IMR-90 (cell line): ENCODE measurements at regions of chr19 and their contacts with region 1.

Region 1: GRCh38 chr19:45643024-45643926 is 4.1 kb upstream of the EML2 start:
- DNase-seq: peak; percentile 61
- ATAC-seq: peak; percentile 19
- H3K4me3 ChIP-seq: no peak overlapping the region
- H3K27ac ChIP-seq: no peak overlapping the region
- H3K4me1 ChIP-seq: peaks cover 13% of the 10 kb centered on the region
- H3K27me3 ChIP-seq: no peaks in the 10 kb centered on the region
- CTCF ChIP-seq: peak; percentile 94
- POLR2A ChIP-seq: no peak
- RAD21 ChIP-seq: peak; percentile 88

Region 2: GRCh38 chr19:45423589-45424190 is 219.6 kb before region 1 on chr19 and contains the start of gene ERCC1:
- CTCF ChIA-PET with region 1: no interaction called
- POLR2A ChIA-PET with region 1: no interaction called
- dilution Hi-C with region 1: no loop called
- in situ Hi-C with region 1: no loop called
- intact Hi-C with region 1: loop called (anchors 5 kb)
- DNase-seq: peak; percentile 94
- ATAC-seq: peak; percentile 83
- H3K4me3 ChIP-seq: peak within 1 kb of the TSS; percentile 70
- H3K27ac ChIP-seq: peak within 1 kb of the TSS; percentile 98
- H3K4me1 ChIP-seq: peaks cover 5% of the 10 kb centered on the region
- H3K27me3 ChIP-seq: no peaks in the 10 kb centered on the region
- CTCF ChIP-seq: no peak
- POLR2A ChIP-seq: peak; percentile 88
- RAD21 ChIP-seq: no peak
- total RNA-seq, gene ERCC1: 76.9 and 84.2 TPM in 2 replicates

Region 3: DNA sequence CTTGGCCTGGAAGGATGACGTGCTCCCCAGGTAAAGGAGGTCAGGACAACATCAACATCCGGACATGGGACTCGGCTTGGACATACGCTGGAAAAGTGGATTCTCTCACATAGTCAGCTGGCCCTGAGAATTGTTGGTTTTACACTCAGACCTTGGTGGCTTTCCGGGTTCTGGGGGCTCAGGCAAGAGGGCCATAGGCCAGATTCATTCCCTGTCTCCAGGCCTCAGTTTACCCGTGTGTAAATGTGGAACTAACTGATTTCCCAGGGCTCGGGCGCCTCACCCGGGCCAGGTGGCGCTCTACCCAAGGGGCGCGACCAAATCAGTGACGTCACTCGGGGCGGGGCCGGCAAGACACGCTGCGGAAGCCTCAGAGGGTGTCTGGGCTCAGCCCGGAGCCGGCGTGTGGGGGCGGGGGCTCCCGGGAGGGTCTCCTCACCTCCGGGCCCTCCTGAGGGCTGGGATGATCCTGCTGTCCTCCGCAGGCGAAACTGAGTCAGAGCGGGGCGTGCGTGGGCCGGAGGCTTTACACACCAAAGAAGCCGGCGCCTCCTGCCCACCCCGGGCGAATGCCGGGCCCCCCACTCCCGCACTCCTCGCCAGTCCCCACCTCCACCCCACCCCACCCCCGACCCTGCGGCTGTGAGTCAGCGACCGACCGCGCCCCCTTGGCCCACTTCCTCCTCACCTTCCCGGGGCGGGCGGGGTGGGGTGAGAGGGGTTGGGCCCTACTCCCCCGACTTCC is 136.9 kb before region 1 on chr19:
- CTCF ChIA-PET with region 1: no interaction called
- POLR2A ChIA-PET with region 1: no interaction called
- dilution Hi-C with region 1: no loop called
- in situ Hi-C with region 1: no loop called
- intact Hi-C with region 1: loop called (anchors 5 kb)
- DNase-seq: peak; percentile 88
- ATAC-seq: peak; percentile 60
- H3K4me3 ChIP-seq: peak overlapping the region; percentile 92
- H3K27ac ChIP-seq: peak overlapping the region; percentile 94
- H3K4me1 ChIP-seq: peaks cover 11% of the 10 kb centered on the region
- H3K27me3 ChIP-seq: no peaks in the 10 kb centered on the region
- CTCF ChIP-seq: peak; percentile 59
- POLR2A ChIP-seq: peak; percentile 65
- RAD21 ChIP-seq: no peak

Region 4: DNA sequence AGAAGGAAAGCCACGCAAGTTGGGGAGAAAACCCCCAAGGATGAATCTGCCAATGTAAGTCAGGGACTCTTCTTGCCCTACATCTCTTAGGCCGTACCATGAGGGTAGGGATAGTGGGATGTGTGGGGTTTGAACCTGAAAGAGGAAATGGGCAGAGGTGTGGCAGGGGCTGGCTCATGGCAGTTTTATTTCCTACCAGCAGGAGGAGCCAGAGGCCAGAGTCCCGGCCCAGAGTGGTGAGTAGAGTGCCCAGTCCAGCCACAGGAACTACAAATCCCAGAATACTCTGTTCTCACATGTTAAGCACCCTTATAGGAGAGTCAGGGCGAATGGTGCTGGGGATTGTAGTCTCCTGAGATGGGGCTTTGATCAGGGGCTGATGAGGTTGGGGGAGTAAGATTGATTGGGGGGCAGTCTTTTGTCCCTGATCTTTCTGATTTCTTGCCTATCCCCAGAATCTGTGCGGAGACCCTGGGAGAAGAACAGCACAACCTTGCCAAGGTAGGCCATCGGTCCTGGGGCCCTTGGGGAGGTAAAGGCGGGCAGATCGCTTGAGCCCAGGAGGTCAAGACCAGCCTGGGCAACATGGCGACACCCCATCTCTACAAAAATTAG is 119.5 kb before region 1 on chr19:
- CTCF ChIA-PET with region 1: no interaction called
- POLR2A ChIA-PET with region 1: no interaction called
- dilution Hi-C with region 1: no loop called
- in situ Hi-C with region 1: loop called (anchors 10 kb)
- intact Hi-C with region 1: loop called (anchors 1 kb)
- DNase-seq: peak; percentile 80
- ATAC-seq: peak; percentile 92
- H3K4me3 ChIP-seq: no peak overlapping the region
- H3K27ac ChIP-seq: no peak overlapping the region
- H3K4me1 ChIP-seq: peaks cover 2% of the 10 kb centered on the region; the same call in 1 of the 2 replicates
- H3K27me3 ChIP-seq: no peaks in the 10 kb centered on the region
- CTCF ChIP-seq: peak; percentile 93
- POLR2A ChIP-seq: no peak
- RAD21 ChIP-seq: peak; percentile 93

Region 5: DNA sequence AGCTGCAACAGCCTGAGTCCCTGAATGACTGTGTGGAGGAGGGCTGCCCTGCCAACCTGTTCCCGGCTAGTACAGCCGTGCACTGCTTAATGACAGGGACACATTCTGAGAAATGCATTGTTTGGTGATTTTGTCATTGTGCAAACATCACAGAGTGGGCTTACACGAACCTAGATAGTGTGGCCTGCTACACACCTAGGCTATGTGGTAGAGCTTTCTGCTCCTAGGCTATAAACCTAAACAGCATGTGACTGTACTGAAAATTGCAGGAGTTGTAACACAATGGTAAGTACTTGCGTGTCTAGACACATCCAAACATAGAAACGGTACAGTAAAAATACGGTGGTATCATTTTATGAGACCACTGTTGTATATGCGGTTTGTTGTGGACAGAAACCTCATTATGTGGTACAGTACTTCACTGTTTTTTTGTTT is 101.0 kb before region 1 on chr19:
- CTCF ChIA-PET with region 1: no interaction called
- POLR2A ChIA-PET with region 1: no interaction called
- dilution Hi-C with region 1: no loop called
- in situ Hi-C with region 1: no loop called
- intact Hi-C with region 1: no loop called
- DNase-seq: no peak
- ATAC-seq: no peak
- H3K4me3 ChIP-seq: no peak overlapping the region
- H3K27ac ChIP-seq: no peak overlapping the region
- H3K4me1 ChIP-seq: no peaks in the 10 kb centered on the region
- H3K27me3 ChIP-seq: no peaks in the 10 kb centered on the region
- CTCF ChIP-seq: no peak
- POLR2A ChIP-seq: no peak
- RAD21 ChIP-seq: no peak

Region 6: GRCh38 chr19:45584332-45585157 is 58.7 kb before region 1 on chr19 and contains the start of gene OPA3:
- CTCF ChIA-PET with region 1: no interaction called
- POLR2A ChIA-PET with region 1: no interaction called
- dilution Hi-C with region 1: no loop called
- in situ Hi-C with region 1: no loop called
- intact Hi-C with region 1: loop called (anchors 2 kb)
- DNase-seq: peak; percentile 100
- ATAC-seq: peak; percentile 96
- H3K4me3 ChIP-seq: peak within 1 kb of the TSS; percentile 81
- H3K27ac ChIP-seq: peak within 1 kb of the TSS; percentile 92
- H3K4me1 ChIP-seq: 0 out of 2 replicates have a peak, but pooled peaks cover 1% of the 10 kb centered on the region
- H3K27me3 ChIP-seq: no peaks in the 10 kb centered on the region
- CTCF ChIP-seq: no peak
- POLR2A ChIP-seq: peak; percentile 97
- RAD21 ChIP-seq: no peak; the same call in 1 of the 2 replicates
- total RNA-seq, gene OPA3: 3.9 and 5.2 TPM in 2 replicates

Region 7: DNA sequence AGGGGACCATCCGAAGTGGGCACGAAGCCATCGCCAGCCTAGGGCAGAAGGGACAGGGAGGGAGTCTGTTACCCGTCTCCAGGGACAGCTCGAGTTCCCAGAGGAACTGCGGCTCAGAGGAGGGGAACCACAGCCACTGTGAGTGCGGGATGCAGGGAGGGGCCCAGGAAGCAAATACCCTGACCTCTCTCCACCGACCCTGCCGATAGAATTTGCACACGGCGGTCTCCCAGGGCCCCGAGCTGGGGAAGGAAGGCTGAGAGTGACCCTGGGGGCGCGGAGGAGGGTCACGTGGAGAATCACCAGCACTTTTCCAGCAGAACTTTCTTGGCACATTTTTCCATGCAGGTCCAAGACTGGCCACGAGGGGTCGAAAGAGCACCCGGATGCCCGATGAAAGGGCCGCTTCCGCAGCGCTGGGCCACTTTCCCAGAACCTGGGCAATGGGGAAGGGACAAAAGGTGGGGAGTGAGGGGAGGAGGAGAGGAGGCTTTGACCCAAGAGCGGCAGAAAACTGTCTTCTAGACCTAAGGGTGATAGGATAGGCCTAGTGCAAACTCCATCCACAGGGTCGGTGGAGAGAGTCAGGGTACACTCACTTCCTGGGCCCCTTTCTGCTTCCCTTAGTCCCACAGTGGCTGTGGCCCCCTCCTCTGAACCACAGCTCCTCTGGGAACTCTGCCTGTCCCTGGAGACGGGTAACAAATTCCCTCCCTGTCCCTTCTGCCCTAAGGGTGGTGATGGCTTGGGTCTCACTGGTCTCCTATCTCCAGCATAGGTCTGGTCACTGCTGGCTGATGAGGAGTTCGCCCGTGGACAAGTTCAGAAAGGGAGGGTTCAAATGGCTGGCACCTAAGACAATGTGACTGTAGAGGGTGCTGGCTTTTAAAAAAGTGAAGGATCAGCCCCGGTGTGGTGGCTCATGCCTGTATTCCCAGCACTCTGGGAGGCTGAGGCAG is 35.9 kb before region 1 on chr19:
- CTCF ChIA-PET with region 1: interaction called, 10 read pairs
- POLR2A ChIA-PET with region 1: no interaction called
- dilution Hi-C with region 1: no loop called
- in situ Hi-C with region 1: no loop called
- intact Hi-C with region 1: loop called (anchors 1 kb)
- DNase-seq: peak; percentile 59
- ATAC-seq: peak; percentile 96
- H3K4me3 ChIP-seq: no peak overlapping the region
- H3K27ac ChIP-seq: no peak overlapping the region
- H3K4me1 ChIP-seq: peaks cover 6% of the 10 kb centered on the region; the same call in 1 of the 2 replicates
- H3K27me3 ChIP-seq: peaks cover 6% of the 10 kb centered on the region
- CTCF ChIP-seq: peak; percentile 94
- POLR2A ChIP-seq: no peak
- RAD21 ChIP-seq: peak; percentile 81